Activated B cell treated with CpG ODN at 0.5 μM for 24 hours (primary cell): ENCODE measurements at regions of chr18 and their contacts with region 1.

Region 1: DNA sequence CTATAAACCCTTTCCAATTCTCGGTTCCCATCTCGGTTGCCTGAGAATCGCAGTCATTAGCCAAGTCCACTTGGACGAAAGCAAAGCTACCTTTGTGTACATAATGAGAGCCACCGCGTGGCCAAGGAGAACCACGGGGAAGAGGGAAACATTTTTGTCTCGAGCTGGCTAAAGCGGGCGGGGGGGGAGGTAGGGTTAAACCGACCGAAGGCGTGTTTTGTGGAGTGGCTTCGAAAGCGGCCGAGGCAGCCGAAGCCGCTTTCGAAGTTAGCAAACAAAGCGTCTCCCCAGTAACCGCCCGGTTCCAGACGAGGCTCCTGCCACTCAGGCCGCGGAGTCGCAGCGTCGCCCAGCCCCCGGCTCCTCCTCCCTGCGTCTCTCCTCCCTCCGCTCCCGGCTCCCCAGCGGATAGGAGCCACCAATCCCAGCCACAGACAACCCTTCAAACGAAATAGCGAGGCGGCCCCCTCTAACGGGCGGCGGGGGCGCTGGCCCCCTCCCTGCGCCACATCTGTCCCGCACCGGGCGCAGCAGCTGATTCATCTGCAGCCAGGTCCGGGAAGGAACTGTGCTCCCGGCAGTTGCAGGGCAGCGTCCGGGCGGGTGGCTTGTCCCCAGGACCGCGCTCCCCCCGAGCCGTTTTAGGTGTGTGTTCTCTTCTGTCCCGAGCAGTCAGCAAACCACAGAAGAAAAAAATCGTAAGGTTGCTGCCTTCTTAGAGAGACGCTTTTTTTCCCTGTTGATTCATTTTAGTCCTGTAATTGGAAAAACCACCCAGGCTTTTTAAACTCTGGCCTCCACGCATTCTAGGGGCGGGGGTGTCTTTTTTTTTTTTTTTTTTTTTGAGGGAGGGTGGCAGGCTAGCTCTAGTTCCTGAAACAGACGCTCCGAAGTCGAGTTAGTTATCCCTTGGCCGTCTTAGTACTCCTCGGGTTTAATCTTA is 1.8 kb upstream of the TGIF1 start:
- DNase-seq: peak; percentile 77
- ATAC-seq: peak; percentile 45
- H3K4me3 Mint-ChIP-seq: peak overlapping the region; percentile 96
- H3K27ac Mint-ChIP-seq: peak overlapping the region; percentile 100
- H3K4me1 Mint-ChIP-seq: peaks cover 34% of the 10 kb centered on the region
- H3K27me3 Mint-ChIP-seq: no peaks in the 10 kb centered on the region
- CTCF ChIP-seq: no peak

Region 2: DNA sequence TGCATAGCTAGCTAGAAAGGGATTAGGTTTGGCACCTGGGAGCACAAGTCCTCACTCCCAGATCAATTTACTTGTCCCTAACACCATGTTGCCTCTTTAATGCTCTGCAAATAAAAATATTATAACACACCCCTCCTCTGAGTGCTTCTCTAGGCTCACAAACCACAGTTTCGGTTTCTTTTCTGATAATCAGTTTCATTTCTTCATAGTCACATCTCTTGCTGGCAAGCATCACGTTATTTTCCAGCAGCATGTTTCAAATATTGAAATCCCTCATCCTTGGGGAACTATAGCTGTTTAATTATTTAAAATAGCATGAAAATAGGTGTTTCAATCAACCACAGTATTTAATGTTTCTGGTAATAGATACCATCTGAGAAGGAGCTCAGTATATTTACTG is 806.5 kb before region 1 on chr18:
- CTCF ChIA-PET with region 1: no interaction called
- POLR2A ChIA-PET with region 1: no interaction called
- intact Hi-C with region 1: loop called (anchors 5 kb)
- DNase-seq: no peak
- ATAC-seq: peak; percentile 59
- H3K4me3 Mint-ChIP-seq: peak overlapping the region; percentile 77
- H3K27ac Mint-ChIP-seq: no peak overlapping the region
- H3K4me1 Mint-ChIP-seq: peaks cover 54% of the 10 kb centered on the region
- H3K27me3 Mint-ChIP-seq: no peaks in the 10 kb centered on the region
- CTCF ChIP-seq: no peak

Region 3: DNA sequence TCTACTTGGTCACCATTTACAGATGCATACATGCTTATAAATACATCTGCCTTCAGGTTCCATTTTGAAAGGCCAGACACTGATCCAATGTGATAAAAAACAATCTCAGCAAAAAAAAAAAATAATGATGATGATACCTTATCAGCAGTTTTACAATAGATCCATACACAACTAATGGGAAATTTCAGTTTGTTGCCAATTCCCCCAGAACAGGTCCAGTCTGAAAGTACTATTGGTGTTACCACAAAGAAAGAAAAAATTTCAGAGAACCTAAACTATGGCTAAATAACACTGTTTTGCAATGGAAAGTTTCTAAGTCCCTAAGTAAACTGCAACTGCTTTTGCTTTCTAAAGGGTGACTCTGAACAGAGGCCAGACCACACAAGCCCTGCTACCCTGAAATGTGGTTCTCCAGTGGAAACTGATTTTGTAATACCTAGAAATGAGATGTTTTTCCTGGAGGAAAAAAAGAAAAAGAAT is 489.3 kb before region 1 on chr18:
- CTCF ChIA-PET with region 1: no interaction called
- POLR2A ChIA-PET with region 1: no interaction called
- intact Hi-C with region 1: loop called (anchors 5 kb)
- DNase-seq: no peak
- ATAC-seq: no peak
- H3K4me3 Mint-ChIP-seq: peak overlapping the region; percentile 32
- H3K27ac Mint-ChIP-seq: peak overlapping the region; percentile 97
- H3K4me1 Mint-ChIP-seq: peaks cover 82% of the 10 kb centered on the region
- H3K27me3 Mint-ChIP-seq: no peaks in the 10 kb centered on the region
- CTCF ChIP-seq: no peak

Region 4: GRCh38 chr18:3177902-3178687 is 270.1 kb before region 1 on chr18:
- CTCF ChIA-PET with region 1: no interaction called
- POLR2A ChIA-PET with region 1: interaction called, 5 read pairs
- intact Hi-C with region 1: loop called (anchors 1 kb)
- DNase-seq: peak; percentile 66
- ATAC-seq: peak; percentile 86
- H3K4me3 Mint-ChIP-seq: peak overlapping the region; percentile 76
- H3K27ac Mint-ChIP-seq: peak overlapping the region; percentile 99
- H3K4me1 Mint-ChIP-seq: peaks cover 32% of the 10 kb centered on the region
- H3K27me3 Mint-ChIP-seq: no peaks in the 10 kb centered on the region
- CTCF ChIP-seq: no peak

Region 5: GRCh38 chr18:3297025-3297984 is 150.9 kb before region 1 on chr18:
- CTCF ChIA-PET with region 1: interaction called, 26 read pairs
- POLR2A ChIA-PET with region 1: interaction called, 20 read pairs
- intact Hi-C with region 1: loop called (anchors 1 kb)
- DNase-seq: peak; percentile 82
- ATAC-seq: peak; percentile 99
- H3K4me3 Mint-ChIP-seq: peak overlapping the region; percentile 95
- H3K27ac Mint-ChIP-seq: peak overlapping the region; percentile 83
- H3K4me1 Mint-ChIP-seq: peaks cover 11% of the 10 kb centered on the region
- H3K27me3 Mint-ChIP-seq: peaks cover 6% of the 10 kb centered on the region
- CTCF ChIP-seq: no peak

Region 6: DNA sequence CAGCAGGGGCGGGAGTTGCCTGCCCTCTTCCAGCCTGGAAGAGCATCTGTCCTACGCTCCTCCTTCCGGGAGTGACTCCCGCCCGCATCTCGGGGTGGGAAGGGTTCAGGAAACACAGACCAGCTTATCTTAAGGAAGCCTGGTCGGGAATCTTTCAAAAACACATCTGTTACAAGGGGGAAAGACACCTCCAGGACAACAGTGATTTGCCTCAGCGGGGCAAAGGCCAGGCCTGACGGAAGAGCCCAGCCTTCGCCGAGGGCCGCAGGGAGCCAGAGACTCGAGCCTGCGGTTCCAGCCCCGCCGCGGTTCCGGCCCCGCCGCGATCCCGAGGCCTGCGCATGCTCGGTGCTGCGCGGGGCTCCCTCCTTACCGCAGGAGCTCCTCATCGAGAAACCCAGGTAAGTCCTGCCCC is 36.3 kb before region 1 on chr18:
- CTCF ChIA-PET with region 1: no interaction called
- POLR2A ChIA-PET with region 1: interaction called, 19 read pairs
- intact Hi-C with region 1: no loop called
- DNase-seq: peak; percentile 32
- ATAC-seq: peak; percentile 66
- H3K4me3 Mint-ChIP-seq: peak overlapping the region; percentile 74
- H3K27ac Mint-ChIP-seq: no peak overlapping the region
- H3K4me1 Mint-ChIP-seq: peaks cover 12% of the 10 kb centered on the region
- H3K27me3 Mint-ChIP-seq: no peaks in the 10 kb centered on the region
- CTCF ChIP-seq: no peak

Region 7: DNA sequence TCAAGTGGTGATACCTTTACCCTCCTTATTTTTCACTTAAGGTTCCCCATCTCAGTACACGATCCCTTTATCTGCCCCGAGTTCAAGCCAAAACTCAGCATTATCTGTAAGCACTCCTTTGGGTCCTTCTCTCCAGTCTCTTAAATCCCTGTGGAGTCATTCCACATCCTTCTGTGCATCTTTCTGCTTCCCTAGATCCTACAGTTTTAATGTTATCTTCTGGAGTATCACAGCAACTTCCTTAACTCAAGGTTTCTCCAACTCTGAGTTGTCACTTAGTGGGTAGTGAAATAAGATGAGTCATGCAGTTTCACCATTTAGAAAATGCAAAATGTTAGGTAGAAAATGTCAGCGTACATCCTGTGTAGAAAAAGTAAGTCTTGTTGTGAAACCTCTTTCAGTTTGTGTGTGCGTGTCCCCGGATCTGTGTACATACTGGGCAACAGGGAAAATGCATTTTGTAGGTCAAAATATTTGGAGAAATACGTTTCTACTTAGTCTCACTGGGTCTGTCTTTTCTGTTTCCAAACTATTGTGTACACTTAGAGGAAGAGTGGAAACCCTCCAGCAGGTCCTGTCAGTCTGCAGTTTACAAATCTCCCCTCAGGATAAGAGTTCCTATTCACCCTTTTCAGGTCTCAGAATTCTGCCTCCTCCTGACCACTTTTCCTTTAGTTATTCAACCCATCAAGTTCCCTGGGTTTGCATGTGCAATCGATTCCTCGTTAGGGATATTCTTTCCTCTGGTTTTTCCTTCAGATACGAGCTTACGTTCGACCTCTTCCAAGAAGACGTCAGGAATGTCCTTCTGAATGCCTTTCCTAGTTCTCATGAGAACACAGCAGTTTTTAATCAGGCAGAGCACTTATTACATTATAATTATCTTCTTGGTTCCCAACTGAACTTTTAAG is 156.6 kb after region 1 on chr18:
- CTCF ChIA-PET with region 1: no interaction called
- POLR2A ChIA-PET with region 1: interaction called, 19 read pairs
- intact Hi-C with region 1: no loop called
- DNase-seq: no peak
- ATAC-seq: peak; percentile 73
- H3K4me3 Mint-ChIP-seq: no peak overlapping the region
- H3K27ac Mint-ChIP-seq: no peak overlapping the region
- H3K4me1 Mint-ChIP-seq: peaks cover 3% of the 10 kb centered on the region
- H3K27me3 Mint-ChIP-seq: no peaks in the 10 kb centered on the region
- CTCF ChIP-seq: no peak